ENCODE measurements at regions of chr3 and their contacts with region 1.

Region 1: DNA sequence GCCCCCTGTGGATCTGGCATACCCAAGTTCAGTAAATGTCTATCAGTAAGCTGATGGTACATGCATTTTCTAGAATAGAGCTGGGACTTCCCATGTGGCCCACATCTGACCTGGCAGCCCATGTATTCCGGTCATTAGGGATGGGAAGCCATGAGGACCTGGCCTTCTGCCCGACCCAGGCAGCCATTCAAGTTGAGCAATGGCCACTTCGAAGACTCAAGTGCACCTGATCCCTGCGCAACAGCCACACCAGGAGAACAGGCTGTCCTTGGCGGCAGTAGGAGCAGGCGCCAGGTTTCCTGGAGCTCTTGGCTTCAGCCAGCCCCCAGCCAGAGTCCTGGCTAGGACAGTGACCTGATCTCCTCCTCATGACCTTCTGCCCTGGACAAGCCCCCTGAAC is 14.6 kb downstream of the HEMK1 start:
- DNase-seq: peak; percentile 83 to 86
- ATAC-seq: peak; percentile 62 to 93 (median 74)
- H3K4me3 ChIP-seq: no peak overlapping the region
- H3K27ac ChIP-seq: peak overlapping the region; percentile 79 to 92 (median 86)
- H3K4me1 ChIP-seq: peaks cover 19 to 81% (median 60%) of the 10 kb centered on the region in 9 donors
- H3K27me3 ChIP-seq: no peaks in the 10 kb centered on the region
- CTCF ChIP-seq: peak in 1 of 9 donors; percentile 3

Region 2: DNA sequence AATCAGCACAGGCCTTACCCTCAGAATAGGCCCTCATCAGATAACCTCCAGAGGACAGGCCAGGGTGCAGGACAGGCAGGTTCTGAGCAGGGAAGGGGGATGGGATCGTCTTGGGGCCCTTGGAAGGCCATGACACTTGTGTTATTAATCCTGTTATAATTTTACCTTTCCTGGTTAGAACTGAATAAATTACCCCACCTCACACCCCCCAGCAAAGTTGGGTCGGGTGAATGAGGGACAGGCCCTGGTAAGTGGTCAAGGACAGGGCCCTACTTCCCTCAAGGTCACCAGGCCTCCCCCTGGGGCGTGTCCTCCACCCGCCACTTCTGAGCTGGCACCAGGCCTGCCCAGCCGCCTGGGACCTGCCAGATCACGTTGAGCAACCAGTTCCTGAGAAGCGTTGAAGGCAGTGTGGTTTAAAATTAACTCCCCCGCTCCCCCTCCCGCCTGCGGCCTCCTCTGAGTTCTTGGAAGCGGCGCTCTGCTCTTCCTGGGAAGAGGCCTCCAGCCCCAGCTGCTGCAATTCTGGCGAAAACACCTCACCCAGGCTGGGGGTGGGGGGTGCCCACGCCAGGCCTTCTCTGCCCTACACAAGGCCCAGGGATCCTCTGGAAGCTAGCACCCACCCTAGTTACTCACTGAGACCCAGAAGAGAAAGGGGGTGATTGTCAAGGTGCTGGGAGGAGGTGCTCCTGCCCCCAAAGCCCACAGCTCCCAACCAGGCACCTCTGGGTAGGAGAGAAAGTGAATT is 17.1 kb after region 1 on chr3:
- intact Hi-C with region 1: loop called in 3 of 10 experiments (anchors 1 to 2 kb)
- DNase-seq: peak; percentile 97
- ATAC-seq: peak; percentile 66 to 90 (median 86)
- H3K4me3 ChIP-seq: peak overlapping the region in 6 of 10 donors; percentile 12 to 37 (median 25)
- H3K27ac ChIP-seq: peak overlapping the region; percentile 93 to 99 (median 98)
- H3K4me1 ChIP-seq: peaks cover 35 to 73% (median 69%) of the 10 kb centered on the region in 9 donors
- H3K27me3 ChIP-seq: no peaks in the 10 kb centered on the region
- CTCF ChIP-seq: no peak

Measured in heart right ventricle (tissue), 16 donors.